Mammary epithelial cell (primary cell): ENCODE measurements at regions of chr7 and their contacts with region 1.

Region 1: DNA sequence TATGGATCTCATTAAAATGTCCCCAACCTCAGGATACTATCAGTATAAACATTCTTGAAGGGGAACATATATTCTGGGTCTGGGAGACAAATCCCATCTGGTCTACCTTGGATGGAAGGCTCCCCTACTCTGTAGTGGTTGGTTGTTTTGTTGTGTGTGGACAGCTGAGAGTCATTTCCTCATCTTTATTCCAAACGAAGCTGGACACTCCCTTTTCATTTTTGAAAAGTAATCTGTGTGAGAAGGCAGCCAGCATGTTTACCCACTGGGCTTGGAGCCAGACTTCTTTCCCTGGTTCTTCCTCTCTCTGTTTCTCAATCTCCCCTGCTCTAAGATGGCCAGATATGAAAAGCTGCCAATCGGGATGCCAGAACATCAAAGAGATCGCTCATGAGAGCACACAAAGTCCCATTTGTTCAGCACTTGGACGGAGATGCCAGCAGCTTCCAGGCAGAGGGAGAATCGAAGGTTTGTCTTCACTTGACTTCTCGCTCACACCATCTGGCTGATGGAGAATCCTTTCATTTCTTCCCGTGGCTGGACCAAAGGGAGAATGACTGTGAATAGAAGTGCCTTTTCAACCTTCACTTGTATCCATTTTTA is 108.1 kb upstream of the AGR3 start:
- DNase-seq: peak; percentile 94
- H3K4me3 ChIP-seq: peak overlapping the region; percentile 13 to 56 (median 47)
- H3K27ac ChIP-seq: peak overlapping the region; percentile 46
- H3K4me1 ChIP-seq: peaks cover 16% of the 10 kb centered on the region
- H3K27me3 ChIP-seq: no peaks in the 10 kb centered on the region
- CTCF ChIP-seq: no peak

Region 2: GRCh38 chr7:16960337-16960965 is 29.5 kb before region 1 on chr7:
- CTCF ChIA-PET with region 1: no interaction called
- dilution Hi-C with region 1: loop called (anchors 5 kb)
- in situ Hi-C with region 1: no loop called
- intact Hi-C with region 1: no loop called
- DNase-seq: no peak
- H3K4me3 ChIP-seq: no peak overlapping the region
- H3K27ac ChIP-seq: no peak overlapping the region
- H3K4me1 ChIP-seq: no peaks in the 10 kb centered on the region
- H3K27me3 ChIP-seq: no peaks in the 10 kb centered on the region
- CTCF ChIP-seq: no peak

Region 3: DNA sequence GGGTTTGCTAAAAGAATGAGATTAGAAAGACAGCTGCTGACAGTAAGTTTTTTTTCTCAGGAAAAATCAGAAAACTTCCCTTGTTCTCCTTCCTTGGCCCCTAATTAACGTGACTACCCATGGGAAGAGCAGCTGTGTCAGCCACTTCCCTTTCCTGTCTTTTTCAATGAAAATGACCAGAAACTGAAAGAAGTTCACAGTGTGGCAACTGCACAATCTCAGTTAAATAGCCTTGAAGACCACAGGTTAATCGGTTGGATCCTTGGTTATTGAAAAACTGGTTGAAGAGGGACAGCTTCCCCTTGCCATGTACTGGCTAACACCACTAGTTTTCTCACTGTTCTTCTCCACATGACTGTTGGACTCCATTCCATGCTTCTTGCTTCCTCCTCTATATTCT is 40.6 kb after region 1 on chr7:
- CTCF ChIA-PET with region 1: no interaction called
- dilution Hi-C with region 1: loop called (anchors 5 kb)
- in situ Hi-C with region 1: no loop called
- intact Hi-C with region 1: loop called (anchors 2 kb)
- DNase-seq: no peak
- H3K4me3 ChIP-seq: no peak overlapping the region
- H3K27ac ChIP-seq: no peak overlapping the region
- H3K4me1 ChIP-seq: no peaks in the 10 kb centered on the region
- H3K27me3 ChIP-seq: no peaks in the 10 kb centered on the region
- CTCF ChIP-seq: no peak

Region 4: GRCh38 chr7:17038160-17039140 is 48.5 kb after region 1 on chr7:
- CTCF ChIA-PET with region 1: no interaction called
- dilution Hi-C with region 1: loop called (anchors 5 kb)
- in situ Hi-C with region 1: no loop called
- intact Hi-C with region 1: no loop called
- DNase-seq: no peak
- H3K4me3 ChIP-seq: no peak overlapping the region
- H3K27ac ChIP-seq: no peak overlapping the region
- H3K4me1 ChIP-seq: peaks cover 25% of the 10 kb centered on the region
- H3K27me3 ChIP-seq: no peaks in the 10 kb centered on the region
- CTCF ChIP-seq: no peak